Naive thymus-derived CD4-positive, alpha-beta T cell (primary cell): ENCODE measurements at regions of chr11 and their contacts with region 1.

Region 1: GRCh38 chr11:96342961-96343711 is at the start of gene MAML2:
- DNase-seq: peak; percentile 67 to 91 (median 85)
- ATAC-seq: peak; percentile 93
- H3K4me3 ChIP-seq: peak within 1 kb of the TSS; percentile 95
- H3K4me3 Mint-ChIP-seq: peak within 1 kb of the TSS; percentile 95 to 99 (median 98)
- H3K27ac ChIP-seq: peak within 1 kb of the TSS; percentile 87
- H3K27ac Mint-ChIP-seq: peak within 1 kb of the TSS; percentile 93 to 98 (median 96)
- H3K4me1 ChIP-seq: peaks cover 11 to 31% of the 10 kb centered on the region in 2 donors
- H3K4me1 Mint-ChIP-seq: peaks cover 13 to 41% (median 19%) of the 10 kb centered on the region in 7 donors
- H3K27me3 ChIP-seq: no peaks in the 10 kb centered on the region
- H3K27me3 Mint-ChIP-seq: no peaks in the 10 kb centered on the region
- total RNA-seq, gene MAML2: 15.6 to 81.3 (median 68.2) TPM

Region 2: GRCh38 chr11:95584589-95584988 is 758.5 kb before region 1 on chr11:
- CTCF ChIA-PET with region 1: no interaction called
- POLR2A ChIA-PET with region 1: no interaction called
- intact Hi-C with region 1: no loop called
- DNase-seq: no peak
- ATAC-seq: no peak
- H3K4me3 ChIP-seq: no peak overlapping the region
- H3K4me3 Mint-ChIP-seq: no peak overlapping the region
- H3K27ac ChIP-seq: no peak overlapping the region
- H3K27ac Mint-ChIP-seq: no peak overlapping the region
- H3K4me1 ChIP-seq: no peaks in the 10 kb centered on the region
- H3K4me1 Mint-ChIP-seq: peaks cover 0 to 30% (median 14%) of the 10 kb centered on the region in 7 donors
- H3K27me3 ChIP-seq: no peaks in the 10 kb centered on the region
- H3K27me3 Mint-ChIP-seq: no peaks in the 10 kb centered on the region

Region 3: GRCh38 chr11:95835768-95836488 is 507.2 kb before region 1 on chr11:
- CTCF ChIA-PET with region 1: interaction called, 15 read pairs
- POLR2A ChIA-PET with region 1: no interaction called
- intact Hi-C with region 1: loop called (anchors 1 kb)
- DNase-seq: peak; percentile 17 to 67 (median 49)
- ATAC-seq: peak; percentile 96
- H3K4me3 ChIP-seq: no peak overlapping the region
- H3K4me3 Mint-ChIP-seq: no peak overlapping the region
- H3K27ac ChIP-seq: no peak overlapping the region
- H3K27ac Mint-ChIP-seq: peak overlapping the region in 4 of 9 donors; percentile 17 to 65 (median 28)
- H3K4me1 ChIP-seq: no peaks in the 10 kb centered on the region
- H3K4me1 Mint-ChIP-seq: peaks cover 0 to 5% (median 0%) of the 10 kb centered on the region in 7 donors
- H3K27me3 ChIP-seq: no peaks in the 10 kb centered on the region
- H3K27me3 Mint-ChIP-seq: no peaks in the 10 kb centered on the region

Region 4: GRCh38 chr11:96054870-96055705 is 288.0 kb before region 1 on chr11:
- CTCF ChIA-PET with region 1: interaction called, 111 read pairs
- POLR2A ChIA-PET with region 1: interaction called, 24 read pairs
- intact Hi-C with region 1: loop called (anchors 1 kb)
- DNase-seq: peak in 5 of 9 donors; percentile 15 to 41 (median 29)
- ATAC-seq: peak; percentile 72
- H3K4me3 ChIP-seq: no peak overlapping the region
- H3K4me3 Mint-ChIP-seq: peak overlapping the region in 4 of 10 donors; percentile 4 to 63 (median 32)
- H3K27ac ChIP-seq: no peak overlapping the region
- H3K27ac Mint-ChIP-seq: peak overlapping the region in 8 of 9 donors; percentile 15 to 88 (median 70)
- H3K4me1 ChIP-seq: peaks cover 0 to 16% of the 10 kb centered on the region in 2 donors
- H3K4me1 Mint-ChIP-seq: peaks cover 18 to 89% (median 77%) of the 10 kb centered on the region in 7 donors
- H3K27me3 ChIP-seq: no peaks in the 10 kb centered on the region
- H3K27me3 Mint-ChIP-seq: no peaks in the 10 kb centered on the region

Region 5: GRCh38 chr11:96197801-96198701 is 145.1 kb before region 1 on chr11:
- CTCF ChIA-PET with region 1: interaction called, 10 read pairs
- POLR2A ChIA-PET with region 1: interaction called, 3 read pairs
- intact Hi-C with region 1: no loop called
- DNase-seq: no peak
- ATAC-seq: peak; percentile 57
- H3K4me3 ChIP-seq: no peak overlapping the region
- H3K4me3 Mint-ChIP-seq: peak overlapping the region in 5 of 10 donors; percentile 13 to 59 (median 41)
- H3K27ac ChIP-seq: no peak overlapping the region
- H3K27ac Mint-ChIP-seq: peak overlapping the region in 8 of 9 donors; percentile 21 to 82 (median 58)
- H3K4me1 ChIP-seq: peaks cover 25 to 49% of the 10 kb centered on the region in 2 donors
- H3K4me1 Mint-ChIP-seq: peaks cover 45 to 93% (median 87%) of the 10 kb centered on the region in 7 donors
- H3K27me3 ChIP-seq: no peaks in the 10 kb centered on the region
- H3K27me3 Mint-ChIP-seq: no peaks in the 10 kb centered on the region

Region 6: GRCh38 chr11:96242971-96243647 is 100.0 kb before region 1 on chr11:
- CTCF ChIA-PET with region 1: interaction called, 25 read pairs
- POLR2A ChIA-PET with region 1: interaction called, 40 read pairs
- intact Hi-C with region 1: loop called (anchors 1 kb)
- DNase-seq: peak; percentile 47 to 83 (median 66)
- ATAC-seq: peak; percentile 92
- H3K4me3 ChIP-seq: peak overlapping the region; percentile 63
- H3K4me3 Mint-ChIP-seq: peak overlapping the region; percentile 76 to 89 (median 84)
- H3K27ac ChIP-seq: peak overlapping the region; percentile 72
- H3K27ac Mint-ChIP-seq: peak overlapping the region; percentile 86 to 94 (median 92)
- H3K4me1 ChIP-seq: peaks cover 8 to 61% of the 10 kb centered on the region in 2 donors
- H3K4me1 Mint-ChIP-seq: peaks cover 37 to 72% (median 63%) of the 10 kb centered on the region in 7 donors
- H3K27me3 ChIP-seq: no peaks in the 10 kb centered on the region
- H3K27me3 Mint-ChIP-seq: no peaks in the 10 kb centered on the region

Region 7: GRCh38 chr11:96331699-96332116 is 11.4 kb before region 1 on chr11:
- CTCF ChIA-PET with region 1: interaction called, 8 read pairs
- POLR2A ChIA-PET with region 1: interaction called, 8 read pairs
- intact Hi-C with region 1: loop called (anchors 1 kb)
- DNase-seq: no peak
- ATAC-seq: peak; percentile 71
- H3K4me3 ChIP-seq: no peak overlapping the region
- H3K4me3 Mint-ChIP-seq: peak overlapping the region in 9 of 10 donors; percentile 33 to 96 (median 57)
- H3K27ac ChIP-seq: no peak overlapping the region
- H3K27ac Mint-ChIP-seq: peak overlapping the region; percentile 18 to 93 (median 63)
- H3K4me1 ChIP-seq: peaks cover 6 to 76% of the 10 kb centered on the region in 2 donors
- H3K4me1 Mint-ChIP-seq: peaks cover 65 to 99% (median 86%) of the 10 kb centered on the region in 7 donors
- H3K27me3 ChIP-seq: no peaks in the 10 kb centered on the region
- H3K27me3 Mint-ChIP-seq: no peaks in the 10 kb centered on the region

Region 8: GRCh38 chr11:96854425-96854824 is 511.3 kb after region 1 on chr11:
- CTCF ChIA-PET with region 1: no interaction called
- POLR2A ChIA-PET with region 1: no interaction called
- intact Hi-C with region 1: no loop called
- DNase-seq: no peak
- ATAC-seq: no peak
- H3K4me3 ChIP-seq: no peak overlapping the region
- H3K4me3 Mint-ChIP-seq: no peak overlapping the region
- H3K27ac ChIP-seq: no peak overlapping the region
- H3K27ac Mint-ChIP-seq: no peak overlapping the region
- H3K4me1 ChIP-seq: no peaks in the 10 kb centered on the region
- H3K4me1 Mint-ChIP-seq: no peaks in the 10 kb centered on the region
- H3K27me3 ChIP-seq: no peaks in the 10 kb centered on the region
- H3K27me3 Mint-ChIP-seq: no peaks in the 10 kb centered on the region